ENCODE measurements at regions of chrX and their contacts with region 1.

Region 1: GRCh38 chrX:9341291-9342201 is 123.3 kb upstream of the TBL1X start:
- DNase-seq: peak in 4 of 6 donors; percentile 11 to 65 (median 28)
- ATAC-seq: peak; percentile 36 to 76 (median 48)
- H3K4me3 ChIP-seq: peak overlapping the region in 2 of 4 donors; percentile 14 to 19
- H3K27ac ChIP-seq: peak overlapping the region in 3 of 4 donors; percentile 17 to 67 (median 58)
- H3K4me1 ChIP-seq: peaks cover 0 to 6% (median 0%) of the 10 kb centered on the region in 3 donors
- H3K27me3 ChIP-seq: no peaks in the 10 kb centered on the region
- CTCF ChIP-seq: no peak

Region 2: DNA sequence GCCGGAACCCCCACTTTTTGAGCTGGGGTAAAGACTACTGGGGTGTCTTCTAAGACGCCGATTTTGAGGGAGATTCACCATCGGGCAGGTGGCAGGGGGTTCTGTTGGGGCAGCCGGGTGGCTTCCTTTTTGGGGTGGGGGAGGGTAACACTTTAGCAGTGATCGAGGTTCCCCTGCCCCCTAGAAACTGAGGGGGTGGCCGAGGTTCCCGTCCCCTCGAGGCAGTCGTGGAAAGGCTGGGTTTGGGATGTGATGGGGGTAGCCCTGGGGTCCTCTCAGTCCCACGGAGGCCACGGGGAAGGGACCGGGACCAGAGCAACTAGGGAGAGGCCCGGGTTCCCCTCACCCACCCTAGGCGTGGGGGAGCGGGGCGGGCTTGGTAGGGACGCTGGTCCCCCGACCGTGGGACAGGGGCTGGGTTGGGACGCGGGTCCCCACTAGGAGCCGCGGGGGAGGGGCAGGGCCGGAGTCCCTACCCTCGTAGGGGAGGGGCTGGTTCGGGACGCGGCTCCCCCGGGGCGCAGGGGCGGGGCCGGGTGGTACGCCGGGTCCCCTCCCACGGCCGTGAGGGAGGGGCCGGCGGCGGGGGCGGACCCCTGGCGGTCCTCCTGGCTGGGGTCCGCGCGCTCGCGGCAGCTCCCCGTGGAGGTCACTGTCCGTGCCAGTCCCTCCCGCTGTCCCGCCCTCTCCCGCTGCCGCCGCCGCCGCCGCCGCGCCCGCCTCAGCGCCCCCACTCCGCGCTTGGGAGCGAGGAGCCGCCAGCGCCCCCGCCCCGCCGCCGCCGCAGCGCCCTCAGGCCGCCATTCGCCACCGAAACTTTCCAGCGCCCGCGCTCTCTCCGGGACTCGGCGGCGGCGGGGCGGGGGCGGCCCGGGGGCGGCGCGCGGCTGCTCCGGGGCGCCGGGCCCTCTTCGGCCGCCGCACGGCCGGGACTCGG is 123.2 kb after region 1 on chrX and contains the start of gene TBL1X:
- intact Hi-C with region 1: loop called in 2 of 3 experiments (anchors 2 to 5 kb)
- DNase-seq: peak; percentile 29 to 84 (median 56)
- ATAC-seq: peak; percentile 14 to 48 (median 24)
- H3K4me3 ChIP-seq: peak within 1 kb of the TSS; percentile 18 to 65 (median 45)
- H3K27ac ChIP-seq: peak within 1 kb of the TSS; percentile 1 to 53 (median 42)
- H3K4me1 ChIP-seq: peaks cover 5 to 14% (median 7%) of the 10 kb centered on the region in 3 donors
- H3K27me3 ChIP-seq: peaks cover 0 to 6% (median 2%) of the 10 kb centered on the region in 4 donors
- CTCF ChIP-seq: no peak
- total RNA-seq, gene TBL1X: 6.7 to 16.6 (median 10.3) TPM